Sigmoid colon (tissue), 7 donors: ENCODE measurements at regions of chr7 and their contacts with region 1.

Region 1: DNA sequence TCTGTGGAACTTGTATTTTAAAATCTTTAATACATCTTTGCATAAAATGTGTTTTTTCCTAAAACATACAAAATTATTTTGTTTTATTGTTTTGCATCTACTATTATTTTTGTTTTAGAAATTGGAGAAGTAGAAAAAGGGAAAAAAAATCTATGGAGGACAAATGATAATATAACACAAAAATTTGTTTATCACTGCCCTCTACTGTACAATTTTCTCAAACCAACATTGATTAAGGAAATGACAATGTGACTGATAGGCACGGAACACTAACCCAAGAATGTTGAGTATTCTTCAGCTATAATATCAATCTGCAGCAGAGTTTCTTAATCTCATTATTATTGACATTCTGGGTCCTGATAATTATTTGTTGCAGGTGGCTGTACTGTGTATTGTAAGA is 9.5 kb upstream of the ING3 start:
- DNase-seq: no peak
- H3K4me3 ChIP-seq: no peak overlapping the region
- H3K27ac ChIP-seq: peak overlapping the region in 1 of 4 donors; percentile 5
- H3K4me1 ChIP-seq: peaks cover 0 to 41% (median 8%) of the 10 kb centered on the region in 4 donors
- H3K27me3 ChIP-seq: no peaks in the 10 kb centered on the region
- CTCF ChIP-seq: peak in 1 of 4 experiments; percentile 17
- EP300 ChIP-seq: no peak
- POLR2A ChIP-seq: no peak

Region 2: GRCh38 chr7:120799813-120800475 is 141.1 kb before region 1 on chr7:
- intact Hi-C with region 1: loop called (anchors 5 kb)
- DNase-seq: no peak
- H3K4me3 ChIP-seq: no peak overlapping the region
- H3K27ac ChIP-seq: no peak overlapping the region
- H3K4me1 ChIP-seq: no peaks in the 10 kb centered on the region
- H3K27me3 ChIP-seq: no peaks in the 10 kb centered on the region
- CTCF ChIP-seq: no peak
- EP300 ChIP-seq: no peak
- POLR2A ChIP-seq: no peak